ENCODE measurements at regions of chr10 and their contacts with region 1.

Region 1: GRCh38 chr10:129030996-129031843 is 435.8 kb upstream of the MGMT start:
- DNase-seq: peak in 8 of 9 experiments; percentile 40 to 76 (median 60)
- ATAC-seq: peak; percentile 48
- H3K4me3 ChIP-seq: no peak overlapping the region
- H3K4me3 Mint-ChIP-seq: no peak overlapping the region
- H3K27ac ChIP-seq: no peak overlapping the region
- H3K27ac Mint-ChIP-seq: no peak overlapping the region
- H3K4me1 ChIP-seq: peaks cover 34% of the 10 kb centered on the region
- H3K4me1 Mint-ChIP-seq: peaks cover 33% of the 10 kb centered on the region
- H3K27me3 ChIP-seq: no peaks in the 10 kb centered on the region
- H3K27me3 Mint-ChIP-seq: peaks cover 3% of the 10 kb centered on the region
- CTCF ChIP-seq: peak; percentile 86

Region 2: DNA sequence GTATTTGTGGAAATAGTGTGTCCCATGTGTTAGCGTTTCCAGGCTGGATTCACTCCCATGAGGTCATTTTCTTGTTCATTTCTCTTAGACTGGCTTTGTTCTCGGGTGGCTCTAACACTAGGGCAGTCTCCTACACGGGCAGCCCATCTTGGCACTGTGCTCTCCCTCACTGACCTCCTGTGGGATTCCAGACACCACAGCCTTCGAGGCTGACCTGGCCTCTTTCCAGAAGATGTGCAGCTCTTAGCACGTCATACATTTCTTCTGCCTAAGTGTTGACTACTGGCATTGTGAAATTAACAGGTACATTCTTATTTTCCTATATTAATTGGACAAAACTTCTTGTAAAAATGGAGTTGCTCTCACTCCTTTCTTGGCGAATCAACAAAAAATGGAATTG is 1907.6 kb before region 1 on chr10:
- CTCF ChIA-PET with region 1: no interaction called
- POLR2A ChIA-PET with region 1: no interaction called
- intact Hi-C with region 1: no loop called
- DNase-seq: no peak
- ATAC-seq: no peak
- H3K4me3 ChIP-seq: no peak overlapping the region
- H3K4me3 Mint-ChIP-seq: no peak overlapping the region
- H3K27ac ChIP-seq: no peak overlapping the region
- H3K27ac Mint-ChIP-seq: no peak overlapping the region
- H3K4me1 ChIP-seq: no peaks in the 10 kb centered on the region
- H3K4me1 Mint-ChIP-seq: no peaks in the 10 kb centered on the region
- H3K27me3 ChIP-seq: no peaks in the 10 kb centered on the region
- H3K27me3 Mint-ChIP-seq: no peaks in the 10 kb centered on the region
- CTCF ChIP-seq: no peak

Region 3: GRCh38 chr10:128451879-128452278 is 579.3 kb before region 1 on chr10:
- CTCF ChIA-PET with region 1: no interaction called
- POLR2A ChIA-PET with region 1: no interaction called
- intact Hi-C with region 1: no loop called
- DNase-seq: no peak
- ATAC-seq: no peak
- H3K4me3 ChIP-seq: no peak overlapping the region
- H3K4me3 Mint-ChIP-seq: no peak overlapping the region
- H3K27ac ChIP-seq: no peak overlapping the region
- H3K27ac Mint-ChIP-seq: no peak overlapping the region
- H3K4me1 ChIP-seq: no peaks in the 10 kb centered on the region
- H3K4me1 Mint-ChIP-seq: no peaks in the 10 kb centered on the region
- H3K27me3 ChIP-seq: peaks cover 0 to 2% of the 10 kb centered on the region in 2 experiments
- H3K27me3 Mint-ChIP-seq: no peaks in the 10 kb centered on the region
- CTCF ChIP-seq: no peak

Region 4: GRCh38 chr10:129105266-129105665 is 74.0 kb after region 1 on chr10:
- CTCF ChIA-PET with region 1: no interaction called
- POLR2A ChIA-PET with region 1: no interaction called
- intact Hi-C with region 1: loop called in 1 of 2 experiments (anchors 5 kb)
- DNase-seq: no peak
- ATAC-seq: no peak
- H3K4me3 ChIP-seq: no peak overlapping the region
- H3K4me3 Mint-ChIP-seq: no peak overlapping the region
- H3K27ac ChIP-seq: no peak overlapping the region
- H3K27ac Mint-ChIP-seq: peak overlapping the region; percentile 76
- H3K4me1 ChIP-seq: peaks cover 71% of the 10 kb centered on the region
- H3K4me1 Mint-ChIP-seq: peaks cover 49% of the 10 kb centered on the region
- H3K27me3 ChIP-seq: no peaks in the 10 kb centered on the region
- H3K27me3 Mint-ChIP-seq: no peaks in the 10 kb centered on the region
- CTCF ChIP-seq: no peak

Region 5: DNA sequence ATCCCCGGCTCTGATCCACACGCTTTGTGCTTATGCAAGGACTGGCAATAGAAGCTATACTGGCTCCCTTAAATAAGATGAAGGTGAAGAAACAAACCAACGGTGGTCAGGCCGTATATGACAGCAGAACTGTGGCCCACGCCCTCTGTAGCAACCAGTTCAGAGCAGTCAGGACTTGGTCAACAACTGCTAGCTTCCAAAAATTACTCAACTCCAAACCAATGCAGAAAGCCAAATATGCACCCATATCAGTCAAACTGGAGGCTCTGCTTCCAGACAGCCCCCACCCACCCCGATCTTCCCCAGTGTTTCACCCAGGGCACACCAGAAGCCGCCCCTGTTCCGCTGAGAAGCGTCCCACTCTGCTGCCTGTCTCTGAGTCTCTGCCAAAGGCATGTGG is 213.5 kb after region 1 on chr10:
- CTCF ChIA-PET with region 1: no interaction called
- POLR2A ChIA-PET with region 1: no interaction called
- intact Hi-C with region 1: no loop called
- DNase-seq: no peak
- ATAC-seq: no peak
- H3K4me3 ChIP-seq: no peak overlapping the region
- H3K4me3 Mint-ChIP-seq: no peak overlapping the region
- H3K27ac ChIP-seq: no peak overlapping the region
- H3K27ac Mint-ChIP-seq: no peak overlapping the region
- H3K4me1 ChIP-seq: no peaks in the 10 kb centered on the region
- H3K4me1 Mint-ChIP-seq: no peaks in the 10 kb centered on the region
- H3K27me3 ChIP-seq: no peaks in the 10 kb centered on the region
- H3K27me3 Mint-ChIP-seq: no peaks in the 10 kb centered on the region
- CTCF ChIP-seq: no peak

Region 6: GRCh38 chr10:129459762-129460539 is 428.7 kb after region 1 on chr10:
- CTCF ChIA-PET with region 1: no interaction called
- POLR2A ChIA-PET with region 1: no interaction called
- intact Hi-C with region 1: loop called in 1 of 2 experiments (anchors 5 kb)
- DNase-seq: no peak
- ATAC-seq: no peak
- H3K4me3 ChIP-seq: no peak overlapping the region
- H3K4me3 Mint-ChIP-seq: no peak overlapping the region
- H3K27ac ChIP-seq: no peak overlapping the region
- H3K27ac Mint-ChIP-seq: no peak overlapping the region
- H3K4me1 ChIP-seq: no peaks in the 10 kb centered on the region
- H3K4me1 Mint-ChIP-seq: no peaks in the 10 kb centered on the region
- H3K27me3 ChIP-seq: peaks cover 0 to 2% of the 10 kb centered on the region in 2 experiments
- H3K27me3 Mint-ChIP-seq: peaks cover 9% of the 10 kb centered on the region
- CTCF ChIP-seq: no peak

Region 7: GRCh38 chr10:129877773-129878371 is 846.7 kb after region 1 on chr10:
- CTCF ChIA-PET with region 1: no interaction called
- POLR2A ChIA-PET with region 1: no interaction called
- intact Hi-C with region 1: loop called in 1 of 2 experiments (anchors 5 kb)
- DNase-seq: peak in 7 of 9 experiments; percentile 11 to 50 (median 35)
- ATAC-seq: no peak
- H3K4me3 ChIP-seq: no peak overlapping the region
- H3K4me3 Mint-ChIP-seq: no peak overlapping the region
- H3K27ac ChIP-seq: no peak overlapping the region
- H3K27ac Mint-ChIP-seq: no peak overlapping the region
- H3K4me1 ChIP-seq: no peaks in the 10 kb centered on the region
- H3K4me1 Mint-ChIP-seq: no peaks in the 10 kb centered on the region
- H3K27me3 ChIP-seq: no peaks in the 10 kb centered on the region
- H3K27me3 Mint-ChIP-seq: peaks cover 3% of the 10 kb centered on the region
- CTCF ChIP-seq: peak; percentile 55

Region 8: DNA sequence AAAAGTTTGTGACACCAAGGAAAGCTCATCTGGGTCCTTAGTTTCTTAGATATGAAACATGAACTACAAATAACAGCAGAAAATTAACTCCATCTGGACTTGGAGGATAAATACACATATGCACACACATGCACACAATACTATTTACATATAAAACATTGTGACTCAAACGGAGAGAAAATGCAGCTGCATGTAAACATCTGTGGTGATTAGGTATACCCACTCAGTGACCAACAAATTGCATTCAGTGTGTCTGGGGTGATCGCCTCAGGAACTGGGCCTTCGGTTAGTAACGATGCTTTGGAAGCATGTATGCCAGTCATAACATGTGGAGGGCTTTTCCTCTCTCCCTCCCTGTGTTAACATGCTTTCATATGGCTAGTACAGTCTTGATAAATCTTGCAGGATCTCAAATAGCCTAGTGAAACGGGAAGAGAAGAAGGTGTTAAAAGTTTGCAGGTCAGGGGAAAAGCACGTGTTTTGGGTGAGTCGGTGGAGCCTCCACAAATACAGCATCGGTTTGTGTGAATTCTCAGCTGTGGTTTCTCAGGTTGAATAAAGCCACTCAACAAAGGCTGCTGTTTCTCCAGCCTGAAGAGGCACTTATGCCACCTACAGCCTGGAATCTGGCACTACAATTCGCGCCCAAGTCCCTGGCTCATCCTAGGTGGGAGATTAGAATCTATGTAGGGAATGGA is 1096.3 kb after region 1 on chr10:
- CTCF ChIA-PET with region 1: interaction called, 8 read pairs
- POLR2A ChIA-PET with region 1: interaction called, 3 read pairs
- intact Hi-C with region 1: loop called in 1 of 2 experiments (anchors 1 kb)
- DNase-seq: peak; percentile 16 to 80 (median 50)
- ATAC-seq: peak; percentile 95
- H3K4me3 ChIP-seq: no peak overlapping the region
- H3K4me3 Mint-ChIP-seq: no peak overlapping the region
- H3K27ac ChIP-seq: no peak overlapping the region
- H3K27ac Mint-ChIP-seq: no peak overlapping the region
- H3K4me1 ChIP-seq: peaks cover 4% of the 10 kb centered on the region
- H3K4me1 Mint-ChIP-seq: peaks cover 7% of the 10 kb centered on the region
- H3K27me3 ChIP-seq: no peaks in the 10 kb centered on the region
- H3K27me3 Mint-ChIP-seq: peaks cover 26% of the 10 kb centered on the region
- CTCF ChIP-seq: peak; percentile 75

Measured in CD8-positive, alpha-beta T cell (primary cell).